Left ventricle myocardium inferior (tissue), 1 donor: ENCODE measurements at regions of chr9 and their contacts with region 1.

Region 1: DNA sequence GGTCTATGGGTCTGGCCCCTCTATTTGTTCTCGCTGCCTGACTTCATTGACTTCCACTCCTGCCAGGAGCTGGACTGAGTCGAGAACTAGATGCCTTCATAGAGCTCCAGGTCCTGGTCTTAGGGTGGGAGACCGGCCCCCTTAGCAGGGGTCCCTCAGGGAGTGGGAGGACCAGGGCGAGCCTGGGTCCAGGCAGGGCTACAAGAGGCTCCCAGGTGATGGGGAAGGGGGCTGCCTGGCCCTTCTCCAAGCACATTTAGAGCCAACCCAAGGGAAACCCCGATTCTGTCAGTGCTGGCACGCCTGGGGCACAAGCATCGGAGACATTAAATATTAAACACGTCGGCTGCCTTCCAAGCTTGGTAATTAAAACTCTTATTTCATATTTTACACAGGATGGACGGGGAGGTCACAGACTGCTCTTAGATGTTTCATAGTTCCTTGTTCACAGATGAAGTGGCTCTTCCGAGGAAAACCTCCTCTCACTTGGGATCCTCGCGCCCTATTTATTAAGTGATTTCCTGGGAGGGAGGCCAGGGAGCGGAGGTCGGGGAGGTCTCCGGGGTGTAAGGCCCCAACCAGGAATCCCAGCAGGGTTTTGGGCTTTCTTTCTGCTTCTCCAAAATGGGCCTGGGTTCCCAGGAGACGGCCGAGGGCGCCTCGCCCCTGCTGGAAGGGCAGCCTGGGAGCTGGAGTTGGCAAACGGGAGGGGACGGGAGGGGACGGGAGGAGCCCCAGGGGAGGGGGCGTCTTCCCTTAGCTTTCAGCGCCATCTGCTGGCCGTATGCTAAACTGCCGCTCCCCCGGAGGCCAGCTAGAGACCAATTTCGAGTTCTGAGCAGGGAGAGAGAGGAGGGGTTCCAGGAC is 23.4 kb upstream of the ZBTB43 start:
- DNase-seq: peak; percentile 83
- H3K4me3 ChIP-seq: peak overlapping the region; percentile 44
- H3K27ac ChIP-seq: no peak overlapping the region
- H3K4me1 ChIP-seq: peaks cover 29% of the 10 kb centered on the region
- H3K27me3 ChIP-seq: peaks cover 61% of the 10 kb centered on the region
- CTCF ChIP-seq: peak; percentile 95

Region 2: DNA sequence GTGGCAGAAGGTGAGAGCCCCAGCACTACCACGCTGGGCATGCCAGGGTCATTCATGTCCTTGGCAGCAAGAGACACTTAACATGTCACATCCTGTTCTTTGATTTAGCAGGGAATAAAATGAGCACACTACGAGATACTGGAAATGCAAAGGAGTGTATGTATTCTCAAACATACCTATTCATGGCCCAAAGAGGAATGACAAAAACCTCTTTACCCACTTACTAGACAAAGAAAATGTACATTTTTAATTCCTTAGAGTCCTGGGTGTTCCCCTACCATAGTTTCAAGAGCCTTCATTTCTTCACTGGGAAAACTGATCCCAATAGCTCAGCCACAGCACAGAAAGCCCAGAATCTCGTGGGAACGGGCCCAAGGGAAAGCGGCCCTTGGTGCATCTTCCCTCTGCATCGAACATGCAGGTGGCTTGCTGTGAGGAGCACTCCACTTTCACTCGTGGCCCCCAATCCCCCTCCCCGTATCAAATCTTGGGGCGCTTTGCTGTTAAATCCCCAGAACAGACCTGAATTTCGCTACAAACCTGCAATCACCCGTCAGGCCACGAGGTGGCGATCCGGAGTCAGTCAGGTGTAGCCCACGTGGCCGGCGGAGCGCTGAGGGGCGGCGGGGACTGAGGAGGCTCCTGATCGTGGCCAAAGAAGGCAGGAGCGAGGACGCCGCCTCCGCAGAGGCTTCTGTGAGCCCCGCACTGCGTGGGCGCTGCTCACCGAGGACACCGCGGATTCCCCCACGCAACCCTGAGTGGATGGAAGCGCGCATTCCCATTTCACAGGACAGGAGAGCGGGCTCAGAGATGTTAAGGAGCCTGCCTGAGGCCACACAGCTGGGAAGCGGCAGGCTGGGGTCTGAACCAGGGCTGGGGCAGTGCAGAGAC is 76.3 kb before region 1 on chr9:
- intact Hi-C with region 1: loop called (anchors 5 kb)
- DNase-seq: peak; percentile 72
- H3K4me3 ChIP-seq: peak overlapping the region; percentile 51
- H3K27ac ChIP-seq: no peak overlapping the region
- H3K4me1 ChIP-seq: peaks cover 20% of the 10 kb centered on the region
- H3K27me3 ChIP-seq: peaks cover 85% of the 10 kb centered on the region
- CTCF ChIP-seq: peak; percentile 92

Region 3: DNA sequence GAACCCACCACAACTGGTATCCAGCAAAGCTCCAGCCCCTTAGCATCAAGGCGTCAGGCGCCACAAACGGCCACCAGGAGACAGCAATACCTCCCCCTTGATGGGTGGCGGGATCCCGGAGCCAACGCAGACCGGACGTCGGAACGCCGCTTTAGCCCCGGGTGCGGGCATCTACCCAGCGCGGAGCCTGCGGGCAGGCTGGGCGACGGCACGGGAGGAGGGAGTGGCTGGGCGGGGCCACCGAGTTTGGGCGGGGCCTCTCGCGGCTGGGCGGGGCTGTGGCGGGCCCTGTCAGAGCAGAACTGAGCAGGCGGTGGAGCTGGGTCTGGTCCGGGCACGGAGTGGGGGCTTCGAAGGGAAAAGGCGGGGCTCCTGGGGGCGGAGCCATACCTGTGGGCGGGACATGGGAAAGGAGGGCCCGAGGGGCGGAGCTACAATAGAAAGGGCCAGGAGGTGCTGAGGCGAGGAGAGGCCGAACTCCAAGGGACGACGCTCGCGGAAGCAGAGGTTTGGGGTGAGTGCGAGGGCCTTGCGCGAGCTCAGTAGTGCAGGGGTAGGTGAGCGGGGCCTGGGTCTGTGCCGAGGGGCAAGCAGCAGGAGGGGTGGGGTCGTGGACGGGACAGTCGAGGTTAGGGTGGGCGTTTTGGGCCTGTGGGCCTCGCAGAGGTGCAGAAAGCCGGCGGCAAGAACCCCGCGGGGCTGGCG is 442.9 kb after region 1 on chr9:
- intact Hi-C with region 1: no loop called
- DNase-seq: peak; percentile 91
- H3K4me3 ChIP-seq: peak overlapping the region; percentile 89
- H3K27ac ChIP-seq: peak overlapping the region; percentile 89
- H3K4me1 ChIP-seq: peaks cover 23% of the 10 kb centered on the region
- H3K27me3 ChIP-seq: no peaks in the 10 kb centered on the region
- CTCF ChIP-seq: peak; percentile 40